PC-3 (cell line): ENCODE measurements at regions of chr3 and their contacts with region 1.

Region 1: GRCh38 chr3:16516695-16517481 is 3.4 kb upstream of the RFTN1 start:
- DNase-seq: peak; percentile 63
- ATAC-seq: peak; percentile 51
- H3K4me3 ChIP-seq: no peak overlapping the region
- H3K27ac ChIP-seq: no peak overlapping the region
- H3K4me1 ChIP-seq: peaks cover 22% of the 10 kb centered on the region
- H3K27me3 ChIP-seq: no peaks in the 10 kb centered on the region
- CTCF ChIP-seq: peak; percentile 71

Region 2: DNA sequence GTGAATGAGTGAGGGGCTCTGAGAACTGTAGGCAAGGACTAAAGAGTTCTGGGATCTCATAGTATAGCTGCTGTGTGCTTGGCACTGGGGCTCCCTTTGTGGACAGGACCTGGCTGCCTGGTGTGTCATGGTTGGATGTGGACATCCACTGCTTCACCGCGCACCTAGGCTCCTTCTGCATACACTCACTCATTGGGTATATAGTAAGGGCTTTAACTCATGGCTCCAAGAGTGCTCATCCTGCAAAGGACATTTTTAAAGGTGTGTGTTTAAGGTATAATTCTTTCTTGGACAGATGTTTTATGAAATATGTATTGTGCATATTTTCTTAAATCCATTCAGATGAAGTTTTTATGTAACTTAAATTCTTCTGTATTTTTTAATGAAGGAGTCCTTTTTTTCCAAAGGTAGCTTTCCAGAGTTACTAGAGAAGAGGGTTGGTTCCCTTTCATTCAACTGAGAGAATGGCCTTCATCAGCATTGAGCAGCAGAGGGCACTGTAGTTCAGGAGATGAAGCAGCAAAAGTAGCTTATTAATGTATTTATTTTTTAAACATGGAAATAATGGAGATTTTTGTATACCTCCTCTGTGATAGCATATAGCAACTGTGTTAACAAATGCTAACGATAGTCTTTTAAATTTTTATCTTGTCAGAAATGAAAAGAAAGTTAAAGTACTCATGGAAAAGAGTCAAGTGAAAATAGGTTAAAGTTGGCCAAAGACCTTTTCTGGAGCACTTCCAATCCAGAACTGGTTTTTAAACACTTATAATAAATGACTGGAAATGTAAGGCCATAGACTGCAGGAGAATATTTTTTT is 226.7 kb before region 1 on chr3:
- CTCF ChIA-PET with region 1: interaction called, 13 read pairs
- POLR2A ChIA-PET with region 1: no interaction called
- intact Hi-C with region 1: loop called (anchors 1 kb)
- DNase-seq: peak; percentile 73
- ATAC-seq: peak; percentile 80
- H3K4me3 ChIP-seq: no peak overlapping the region
- H3K27ac ChIP-seq: no peak overlapping the region
- H3K4me1 ChIP-seq: no peaks in the 10 kb centered on the region
- H3K27me3 ChIP-seq: no peaks in the 10 kb centered on the region
- CTCF ChIP-seq: peak; percentile 95

Region 3: GRCh38 chr3:16309558-16309957 is 207.3 kb before region 1 on chr3:
- CTCF ChIA-PET with region 1: no interaction called
- POLR2A ChIA-PET with region 1: no interaction called
- intact Hi-C with region 1: loop called (anchors 1 kb)
- DNase-seq: peak; percentile 80
- ATAC-seq: peak; percentile 100
- H3K4me3 ChIP-seq: no peak overlapping the region
- H3K27ac ChIP-seq: no peak overlapping the region
- H3K4me1 ChIP-seq: peaks cover 8% of the 10 kb centered on the region
- H3K27me3 ChIP-seq: no peaks in the 10 kb centered on the region
- CTCF ChIP-seq: no peak

Region 4: GRCh38 chr3:16456784-16457415 is 60.0 kb before region 1 on chr3:
- CTCF ChIA-PET with region 1: no interaction called
- POLR2A ChIA-PET with region 1: no interaction called
- intact Hi-C with region 1: loop called (anchors 2 kb)
- DNase-seq: peak; percentile 87
- ATAC-seq: peak; percentile 97
- H3K4me3 ChIP-seq: no peak overlapping the region
- H3K27ac ChIP-seq: peak overlapping the region; percentile 38
- H3K4me1 ChIP-seq: peaks cover 21% of the 10 kb centered on the region
- H3K27me3 ChIP-seq: no peaks in the 10 kb centered on the region
- CTCF ChIP-seq: no peak

Region 5: DNA sequence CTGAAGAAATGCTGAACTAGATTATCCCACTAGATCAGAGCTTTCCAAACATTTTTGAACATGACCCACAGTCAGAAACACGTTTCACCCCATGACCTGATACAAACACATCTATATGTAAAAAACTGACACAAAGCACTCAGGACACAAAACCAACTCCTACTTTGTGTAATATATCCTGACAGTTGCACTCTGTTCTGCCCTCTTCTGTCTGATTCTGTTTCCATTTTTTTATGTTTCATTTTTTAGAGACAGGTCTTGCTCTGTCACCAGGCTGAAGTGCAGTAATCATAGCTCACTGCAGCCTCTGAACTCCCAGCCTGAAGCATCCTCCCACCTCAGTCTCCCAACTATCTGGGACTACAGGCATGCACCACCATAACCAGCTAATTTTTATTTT is 12.4 kb after region 1 on chr3:
- CTCF ChIA-PET with region 1: interaction called, 11 read pairs
- POLR2A ChIA-PET with region 1: no interaction called
- intact Hi-C with region 1: no loop called
- DNase-seq: no peak
- ATAC-seq: peak; percentile 46; the same call in 1 of the 2 replicates
- H3K4me3 ChIP-seq: no peak overlapping the region
- H3K27ac ChIP-seq: no peak overlapping the region
- H3K4me1 ChIP-seq: no peaks in the 10 kb centered on the region
- H3K27me3 ChIP-seq: peaks cover 31% of the 10 kb centered on the region
- CTCF ChIP-seq: 0 out of 2 replicates have a peak, but pooled peaks have one; percentile 18

Region 6: DNA sequence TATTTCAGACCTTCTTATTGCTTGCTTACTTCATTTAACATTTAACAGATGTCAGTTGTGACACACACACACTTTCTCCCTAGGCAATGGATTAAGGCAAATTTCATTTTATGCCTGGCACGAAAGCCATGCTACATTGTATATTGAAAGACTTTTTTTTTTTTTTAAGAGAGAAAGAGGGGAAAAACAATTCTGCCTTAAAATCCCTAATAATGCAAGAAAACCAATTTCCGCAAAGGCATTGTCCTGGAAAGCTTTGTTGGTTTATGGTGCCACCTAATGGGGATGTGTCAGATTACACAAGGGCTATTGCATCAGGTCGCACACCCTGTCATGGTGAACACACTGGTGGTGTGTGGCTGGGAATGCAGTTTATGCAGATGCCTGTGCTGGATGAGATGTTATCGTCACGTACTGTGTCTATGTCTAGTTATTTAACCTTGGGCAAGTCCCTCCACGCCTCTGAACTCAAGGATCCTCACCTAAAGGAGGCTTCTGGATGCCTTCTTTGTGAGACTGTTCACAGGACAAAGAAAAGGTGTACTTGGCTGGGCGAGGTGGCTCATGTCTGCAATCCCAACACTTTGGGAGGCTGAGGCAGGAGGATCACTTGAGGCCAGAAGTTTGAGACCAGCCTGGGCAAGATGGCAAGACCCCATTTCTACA is 33.9 kb after region 1 on chr3:
- CTCF ChIA-PET with region 1: no interaction called
- POLR2A ChIA-PET with region 1: no interaction called
- intact Hi-C with region 1: loop called (anchors 1 kb)
- DNase-seq: peak; percentile 92
- ATAC-seq: peak; percentile 95
- H3K4me3 ChIP-seq: peak overlapping the region; percentile 22; the same call in 1 of the 2 replicates
- H3K27ac ChIP-seq: no peak overlapping the region
- H3K4me1 ChIP-seq: peaks cover 8% of the 10 kb centered on the region
- H3K27me3 ChIP-seq: no peaks in the 10 kb centered on the region
- CTCF ChIP-seq: peak; percentile 95

Region 7: DNA sequence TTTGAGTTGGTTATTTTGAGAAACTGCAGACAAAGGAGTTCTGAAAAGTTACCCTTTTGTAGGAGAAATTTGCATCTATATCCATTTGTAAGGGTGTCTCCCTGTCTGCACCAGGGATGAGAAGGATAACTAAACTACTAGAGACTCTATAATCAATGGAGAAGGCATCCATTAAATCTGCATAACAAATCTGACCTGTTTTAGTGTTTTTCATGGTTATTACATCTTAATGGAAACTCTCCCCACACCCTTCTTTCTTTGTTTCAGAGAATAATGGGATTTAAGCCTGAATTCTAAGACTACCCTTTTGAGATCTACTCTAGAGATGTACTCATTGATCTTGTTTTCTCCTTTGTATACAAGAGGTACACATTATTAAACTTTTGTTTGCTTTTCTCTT is 170.3 kb after region 1 on chr3:
- CTCF ChIA-PET with region 1: no interaction called
- POLR2A ChIA-PET with region 1: no interaction called
- intact Hi-C with region 1: no loop called
- DNase-seq: no peak
- ATAC-seq: no peak
- H3K4me3 ChIP-seq: no peak overlapping the region
- H3K27ac ChIP-seq: no peak overlapping the region
- H3K4me1 ChIP-seq: no peaks in the 10 kb centered on the region
- H3K27me3 ChIP-seq: no peaks in the 10 kb centered on the region
- CTCF ChIP-seq: no peak